BJ (cell line): ENCODE measurements at regions of chr19 and their contacts with region 1.

Region 1: DNA sequence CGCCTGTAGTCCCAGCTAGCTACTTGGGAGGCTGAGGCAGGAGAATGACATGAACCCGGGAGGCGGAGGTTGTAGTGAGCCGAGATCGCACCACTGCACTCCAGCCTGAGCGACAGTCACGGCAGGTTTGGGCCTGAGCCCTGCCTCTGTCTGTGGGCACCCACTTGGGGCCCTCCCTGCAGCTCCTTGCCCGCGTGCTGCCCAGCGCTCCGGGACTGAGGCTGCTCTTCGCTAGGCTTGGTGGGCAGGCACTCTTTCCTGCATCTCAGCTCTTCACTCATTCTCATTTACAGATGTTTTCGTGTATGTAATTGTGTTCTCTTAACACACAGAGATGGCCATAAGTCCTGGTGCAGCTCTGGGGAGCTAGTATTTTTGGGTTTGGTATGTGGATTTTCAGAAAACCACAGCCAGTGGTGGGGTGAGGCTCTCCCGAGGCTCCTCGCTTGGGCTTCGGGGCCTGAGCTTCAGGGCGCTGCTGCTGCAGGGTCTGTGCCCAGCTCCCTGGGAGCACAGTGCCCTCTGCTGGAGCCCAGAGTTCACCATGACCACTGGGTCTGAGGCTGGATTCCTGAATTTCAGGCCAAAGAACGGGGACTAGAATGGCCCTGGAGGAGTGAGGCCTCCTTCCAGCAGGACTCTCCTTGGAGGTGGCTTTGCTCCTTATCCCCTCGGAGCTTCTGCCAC is 15.2 kb downstream of the UPF1 start:
- DNase-seq: no peak
- H3K4me3 ChIP-seq: no peak overlapping the region
- H3K27me3 ChIP-seq: no peaks in the 10 kb centered on the region
- CTCF ChIP-seq: peak; percentile 95

Region 2: GRCh38 chr19:18594096-18594823 is 252.7 kb before region 1 on chr19:
- CTCF ChIA-PET with region 1: interaction called, 40 read pairs
- POLR2A ChIA-PET with region 1: interaction called, 3 read pairs
- DNase-seq: no peak
- H3K4me3 ChIP-seq: peak overlapping the region; percentile 35
- H3K27me3 ChIP-seq: no peaks in the 10 kb centered on the region
- CTCF ChIP-seq: peak; percentile 50

Region 3: DNA sequence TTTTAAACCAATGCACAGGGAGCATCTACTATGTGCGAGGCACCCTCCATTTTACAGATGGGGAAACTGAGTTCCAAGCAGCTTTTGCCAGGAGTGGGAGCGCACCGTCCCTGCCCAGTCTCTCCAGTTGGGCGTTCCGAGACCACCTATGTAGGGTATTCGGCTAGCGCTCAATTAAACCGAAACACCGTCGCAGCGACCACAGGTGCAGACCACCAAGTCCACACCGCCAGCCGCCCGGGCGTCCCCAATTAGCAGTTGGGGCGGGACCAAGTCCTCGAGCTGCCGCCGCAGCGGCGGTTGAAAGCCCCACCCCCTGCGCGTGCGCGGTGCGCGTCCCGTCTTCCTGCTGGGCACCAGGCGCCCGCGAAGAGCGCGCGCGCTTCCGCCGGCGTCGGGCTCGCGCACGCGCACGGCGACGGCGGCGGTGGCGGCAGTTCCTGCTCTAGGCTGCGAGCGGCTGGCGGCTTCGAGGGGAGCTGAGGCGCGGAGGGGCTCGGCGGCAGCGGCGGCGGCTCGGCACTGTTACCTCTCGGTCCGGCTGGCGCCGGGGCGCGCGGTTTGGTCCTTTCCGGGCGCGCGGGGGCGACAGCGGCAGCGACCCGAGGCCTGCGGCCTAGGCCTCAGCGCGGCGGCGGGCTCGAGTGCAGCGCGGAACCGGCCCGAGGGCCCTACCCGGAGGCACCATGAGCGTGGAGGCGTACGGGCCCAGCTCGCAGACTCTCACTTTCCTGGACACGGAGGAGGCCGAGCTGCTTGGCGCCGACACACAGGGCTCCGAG is 15.3 kb before region 1 on chr19 and contains the start of gene UPF1:
- CTCF ChIA-PET with region 1: interaction called, 47 read pairs
- POLR2A ChIA-PET with region 1: no interaction called
- DNase-seq: peak; percentile 57
- H3K4me3 ChIP-seq: peak within 1 kb of the TSS; percentile 86
- H3K27me3 ChIP-seq: no peaks in the 10 kb centered on the region
- CTCF ChIP-seq: no peak
- polyA plus RNA-seq, gene UPF1: 15.4 and 24.1 TPM in 2 replicates

Region 4: DNA sequence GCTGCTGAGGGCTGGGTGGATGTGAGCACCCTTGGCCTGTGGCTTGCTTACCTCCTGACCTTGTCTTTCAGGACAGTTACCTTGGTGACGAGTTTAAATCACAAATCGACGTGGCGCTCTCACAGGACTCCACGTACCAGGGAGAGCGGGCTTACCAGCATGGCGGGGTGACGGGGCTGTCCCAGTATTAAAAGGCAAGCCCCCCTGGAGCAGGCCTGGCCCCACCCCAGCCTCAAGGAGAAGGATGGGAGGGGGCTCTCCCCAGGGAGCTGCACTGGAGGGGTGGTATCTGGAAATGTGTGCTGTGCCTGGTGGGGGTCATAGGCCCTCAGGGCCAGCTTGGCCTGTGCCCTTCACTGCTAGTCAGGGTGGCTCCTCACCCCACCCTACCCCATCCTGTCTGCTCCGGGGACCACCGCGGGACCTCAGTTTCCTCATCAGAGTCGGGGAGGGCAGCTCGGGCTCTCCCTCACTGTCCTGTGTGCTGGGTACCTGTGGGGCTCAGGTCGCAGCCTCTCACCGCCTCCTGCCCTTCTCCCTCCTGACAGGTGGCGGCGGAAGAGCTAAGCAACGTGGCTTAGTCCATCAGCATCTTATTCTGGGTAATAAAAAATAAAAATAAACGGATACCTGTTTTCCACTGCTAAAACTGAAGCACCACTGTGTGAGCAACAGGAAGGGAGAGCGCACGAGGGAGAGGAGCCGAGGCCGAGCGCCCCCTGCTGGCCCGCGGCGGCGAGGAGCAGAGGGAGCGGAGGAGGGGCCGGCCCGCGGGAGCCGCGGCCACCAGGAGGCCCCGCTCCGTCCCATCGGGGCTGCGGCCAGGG is 19.2 kb after region 1 on chr19:
- CTCF ChIA-PET with region 1: interaction called, 40 read pairs
- POLR2A ChIA-PET with region 1: no interaction called
- DNase-seq: no peak
- H3K4me3 ChIP-seq: no peak overlapping the region
- H3K27me3 ChIP-seq: no peaks in the 10 kb centered on the region
- CTCF ChIP-seq: peak; percentile 73

Region 5: DNA sequence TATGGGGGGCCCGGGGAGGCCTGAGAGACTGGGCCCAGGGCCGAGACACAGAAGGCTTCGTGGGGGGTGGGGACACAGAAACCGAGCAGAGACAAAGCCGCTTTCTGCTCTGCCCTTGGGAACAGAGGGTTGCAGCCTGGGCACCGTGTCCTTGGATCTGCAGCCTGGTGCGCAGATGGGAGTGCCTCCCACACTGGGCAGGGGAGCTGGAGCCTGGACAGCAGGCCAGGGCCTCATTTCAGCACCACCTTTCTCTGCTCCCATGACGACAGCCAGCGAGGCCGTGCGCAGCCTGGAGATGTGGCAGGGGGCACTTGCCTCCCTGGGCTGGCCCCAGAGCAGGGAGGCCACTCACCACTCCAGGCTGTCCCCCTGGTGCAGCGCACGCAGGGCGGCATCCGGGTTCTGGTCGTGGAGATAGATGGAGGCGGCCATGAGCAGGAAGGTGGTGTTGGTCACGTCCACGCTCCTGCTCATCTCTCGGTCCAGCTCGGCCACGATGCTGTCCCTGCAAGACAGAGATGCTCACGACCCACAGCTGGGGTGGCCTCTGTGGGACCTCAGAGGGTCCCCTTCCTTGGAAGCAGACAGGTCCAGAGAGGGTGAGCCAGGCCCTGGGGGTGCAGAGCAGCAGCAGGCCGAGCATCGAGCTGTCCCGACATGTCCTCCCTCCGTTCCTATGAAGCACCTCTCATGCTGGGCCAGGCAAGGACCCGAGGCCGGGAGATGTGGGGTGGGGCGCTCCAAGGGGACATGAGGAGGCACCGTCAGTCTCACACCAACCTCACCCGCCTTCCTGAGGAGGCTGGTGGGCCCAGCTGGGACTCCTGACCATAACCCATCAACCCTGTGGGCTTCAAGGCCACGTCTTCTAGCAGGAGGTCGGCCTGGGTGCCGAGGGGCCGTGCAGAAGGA is 59.9 kb after region 1 on chr19:
- CTCF ChIA-PET with region 1: no interaction called
- POLR2A ChIA-PET with region 1: no interaction called
- DNase-seq: no peak
- H3K4me3 ChIP-seq: no peak overlapping the region
- H3K27me3 ChIP-seq: no peaks in the 10 kb centered on the region
- CTCF ChIP-seq: no peak

Region 6: DNA sequence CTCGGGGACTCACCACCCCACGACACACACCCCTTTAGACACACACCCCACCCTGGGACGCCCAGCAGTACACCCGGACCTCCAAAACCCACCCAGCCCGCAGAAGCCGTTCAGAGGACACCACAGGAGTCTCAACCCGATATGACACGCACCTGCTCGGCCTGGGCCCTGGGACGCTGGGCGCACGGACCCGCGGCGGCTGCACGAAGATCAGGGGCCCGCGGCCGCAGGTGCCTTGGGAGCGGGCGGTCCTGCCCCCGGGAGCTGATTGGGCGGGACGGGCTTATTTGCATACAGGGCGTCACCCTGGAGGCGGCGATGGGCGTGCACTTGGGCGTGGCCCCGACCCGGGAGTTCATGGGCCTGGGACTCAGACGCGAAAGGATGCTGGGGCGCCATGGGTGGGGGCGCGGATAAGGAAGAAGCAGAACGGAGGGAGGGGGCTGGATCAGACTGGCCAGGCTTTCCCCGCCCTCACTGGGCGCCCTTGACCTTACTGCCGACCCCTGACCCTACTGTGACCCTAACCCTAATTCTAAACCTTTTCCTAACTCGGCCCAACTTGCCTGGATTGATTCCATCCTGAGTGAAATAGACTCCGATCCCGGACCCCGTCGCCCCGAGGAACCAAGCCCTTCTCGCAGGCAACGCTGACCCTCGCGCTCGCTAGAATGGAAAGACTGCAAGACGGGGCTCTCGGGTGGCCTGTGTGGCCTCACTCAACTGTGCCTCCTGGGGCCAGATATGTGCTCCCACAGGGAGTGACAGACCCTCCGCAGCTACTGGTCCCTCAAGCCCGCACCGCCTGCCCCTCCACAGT is 323.3 kb after region 1 on chr19 and contains the start of gene MEF2B:
- CTCF ChIA-PET with region 1: no interaction called
- POLR2A ChIA-PET with region 1: no interaction called
- DNase-seq: no peak
- H3K4me3 ChIP-seq: peak within 1 kb of the TSS; percentile 23
- H3K27me3 ChIP-seq: no peaks in the 10 kb centered on the region
- CTCF ChIP-seq: no peak
- polyA plus RNA-seq, gene MEF2B: 0.10 and 0.39 TPM in 2 replicates